Naive thymus-derived CD4-positive, alpha-beta T cell (primary cell): ENCODE measurements at regions of chr15 and their contacts with region 1.

Region 1: GRCh38 chr15:99644913-99645542 is 79.2 kb downstream of the MEF2A start:
- DNase-seq: no peak
- ATAC-seq: no peak
- H3K4me3 ChIP-seq: no peak overlapping the region
- H3K4me3 Mint-ChIP-seq: no peak overlapping the region
- H3K27ac ChIP-seq: no peak overlapping the region
- H3K27ac Mint-ChIP-seq: no peak overlapping the region
- H3K4me1 ChIP-seq: no peaks in the 10 kb centered on the region
- H3K4me1 Mint-ChIP-seq: peaks cover 0 to 13% (median 12%) of the 10 kb centered on the region in 7 donors
- H3K27me3 ChIP-seq: no peaks in the 10 kb centered on the region
- H3K27me3 Mint-ChIP-seq: no peaks in the 10 kb centered on the region

Region 2: GRCh38 chr15:99604865-99605264 is 40.2 kb before region 1 on chr15:
- CTCF ChIA-PET with region 1: no interaction called
- POLR2A ChIA-PET with region 1: no interaction called
- intact Hi-C with region 1: loop called in 1 of 2 experiments (anchors 5 kb)
- DNase-seq: no peak
- ATAC-seq: no peak
- H3K4me3 ChIP-seq: no peak overlapping the region
- H3K4me3 Mint-ChIP-seq: no peak overlapping the region
- H3K27ac ChIP-seq: no peak overlapping the region
- H3K27ac Mint-ChIP-seq: peak overlapping the region in 3 of 9 donors; percentile 6 to 21 (median 8)
- H3K4me1 ChIP-seq: peaks cover 0 to 8% of the 10 kb centered on the region in 2 donors
- H3K4me1 Mint-ChIP-seq: peaks cover 26 to 89% (median 69%) of the 10 kb centered on the region in 7 donors
- H3K27me3 ChIP-seq: no peaks in the 10 kb centered on the region
- H3K27me3 Mint-ChIP-seq: no peaks in the 10 kb centered on the region